Activated naive CD4-positive, alpha-beta T cell treated with anti-CD3 and anti-CD28 coated beads for 36 hours (primary cell): ENCODE measurements at regions of chr4 and their contacts with region 1.

Region 1: GRCh38 chr4:173420324-173420752 is 21.4 kb upstream of the SCRG1 start:
- DNase-seq: no peak
- H3K4me3 Mint-ChIP-seq: no peak overlapping the region
- H3K27ac Mint-ChIP-seq: no peak overlapping the region
- H3K4me1 Mint-ChIP-seq: peaks cover 4% of the 10 kb centered on the region
- H3K27me3 Mint-ChIP-seq: peaks cover 3% of the 10 kb centered on the region

Region 2: GRCh38 chr4:173025131-173025530 is 395.2 kb before region 1 on chr4:
- CTCF ChIA-PET with region 1: interaction called, 3 read pairs
- intact Hi-C with region 1: loop called (anchors 5 kb)
- DNase-seq: peak; percentile 43
- H3K4me3 Mint-ChIP-seq: no peak overlapping the region
- H3K27ac Mint-ChIP-seq: no peak overlapping the region
- H3K4me1 Mint-ChIP-seq: peaks cover 4% of the 10 kb centered on the region
- H3K27me3 Mint-ChIP-seq: no peaks in the 10 kb centered on the region

Region 3: DNA sequence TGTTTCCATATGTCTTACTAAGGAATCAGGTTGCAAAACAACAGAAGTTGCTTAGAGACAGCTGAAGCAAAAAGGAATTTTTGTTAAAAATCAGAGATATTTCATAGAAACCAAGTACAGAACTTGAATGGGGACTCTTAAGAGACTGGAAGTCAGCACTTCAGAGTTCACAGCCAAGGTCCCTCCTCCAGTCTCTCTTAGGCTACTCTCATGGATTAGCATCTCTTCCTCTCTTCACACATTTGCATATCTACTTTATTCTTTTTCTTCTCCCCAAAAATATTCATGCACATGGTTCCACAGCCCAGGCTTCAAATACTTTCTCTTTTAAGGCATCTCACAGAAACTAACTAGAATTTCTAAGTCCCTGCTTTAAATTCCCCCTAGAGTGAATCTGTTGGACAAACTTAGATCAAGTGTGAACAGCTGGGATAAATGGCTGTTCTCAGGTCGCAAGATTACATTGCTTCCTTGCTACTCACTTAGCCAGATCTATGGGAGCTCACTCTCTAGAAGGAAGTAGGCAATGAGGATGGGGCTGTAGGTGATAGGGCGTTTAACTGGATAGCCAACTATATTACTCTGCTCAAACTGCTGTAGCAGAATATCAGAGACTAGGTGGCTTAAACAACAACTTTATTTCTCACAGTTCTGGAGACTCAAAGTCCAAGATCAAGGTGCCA is 325.5 kb before region 1 on chr4:
- CTCF ChIA-PET with region 1: no interaction called
- intact Hi-C with region 1: no loop called
- DNase-seq: no peak
- H3K4me3 Mint-ChIP-seq: no peak overlapping the region
- H3K27ac Mint-ChIP-seq: no peak overlapping the region
- H3K4me1 Mint-ChIP-seq: no peaks in the 10 kb centered on the region
- H3K27me3 Mint-ChIP-seq: no peaks in the 10 kb centered on the region

Region 4: DNA sequence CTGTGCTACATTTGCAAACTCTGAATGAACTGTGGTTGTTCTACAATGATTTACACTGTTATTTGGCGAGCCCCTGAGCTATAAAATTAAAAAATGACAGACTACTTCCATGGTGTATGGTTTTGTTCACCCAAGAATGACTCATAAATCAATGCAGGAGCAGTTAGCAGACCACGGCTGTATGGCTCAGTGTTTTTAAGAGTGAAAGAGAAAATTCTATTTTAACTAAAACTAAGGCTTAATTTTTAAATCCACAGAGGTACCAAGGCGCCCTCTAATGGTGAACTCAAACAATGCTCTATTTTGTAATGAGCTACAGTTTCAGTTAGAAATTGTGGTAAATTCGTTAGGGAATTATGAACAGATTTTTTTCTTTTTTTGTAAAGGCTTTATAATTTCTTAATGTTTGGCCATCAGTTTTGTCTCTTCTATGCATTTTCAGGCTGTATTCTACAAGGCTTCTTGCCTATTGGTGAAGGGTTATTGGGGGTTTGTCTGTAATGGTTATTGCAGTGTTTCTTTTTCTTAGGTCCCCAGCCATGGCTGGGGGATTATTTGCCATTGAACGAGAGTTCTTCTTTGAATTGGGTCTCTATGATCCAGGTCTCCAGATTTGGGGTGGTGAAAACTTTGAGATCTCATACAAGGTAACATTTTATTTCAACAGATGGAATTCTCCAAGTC is 118.7 kb before region 1 on chr4:
- CTCF ChIA-PET with region 1: interaction called, 11 read pairs
- intact Hi-C with region 1: no loop called
- DNase-seq: peak; percentile 39
- H3K4me3 Mint-ChIP-seq: no peak overlapping the region
- H3K27ac Mint-ChIP-seq: no peak overlapping the region
- H3K4me1 Mint-ChIP-seq: peaks cover 2% of the 10 kb centered on the region
- H3K27me3 Mint-ChIP-seq: no peaks in the 10 kb centered on the region

Region 5: DNA sequence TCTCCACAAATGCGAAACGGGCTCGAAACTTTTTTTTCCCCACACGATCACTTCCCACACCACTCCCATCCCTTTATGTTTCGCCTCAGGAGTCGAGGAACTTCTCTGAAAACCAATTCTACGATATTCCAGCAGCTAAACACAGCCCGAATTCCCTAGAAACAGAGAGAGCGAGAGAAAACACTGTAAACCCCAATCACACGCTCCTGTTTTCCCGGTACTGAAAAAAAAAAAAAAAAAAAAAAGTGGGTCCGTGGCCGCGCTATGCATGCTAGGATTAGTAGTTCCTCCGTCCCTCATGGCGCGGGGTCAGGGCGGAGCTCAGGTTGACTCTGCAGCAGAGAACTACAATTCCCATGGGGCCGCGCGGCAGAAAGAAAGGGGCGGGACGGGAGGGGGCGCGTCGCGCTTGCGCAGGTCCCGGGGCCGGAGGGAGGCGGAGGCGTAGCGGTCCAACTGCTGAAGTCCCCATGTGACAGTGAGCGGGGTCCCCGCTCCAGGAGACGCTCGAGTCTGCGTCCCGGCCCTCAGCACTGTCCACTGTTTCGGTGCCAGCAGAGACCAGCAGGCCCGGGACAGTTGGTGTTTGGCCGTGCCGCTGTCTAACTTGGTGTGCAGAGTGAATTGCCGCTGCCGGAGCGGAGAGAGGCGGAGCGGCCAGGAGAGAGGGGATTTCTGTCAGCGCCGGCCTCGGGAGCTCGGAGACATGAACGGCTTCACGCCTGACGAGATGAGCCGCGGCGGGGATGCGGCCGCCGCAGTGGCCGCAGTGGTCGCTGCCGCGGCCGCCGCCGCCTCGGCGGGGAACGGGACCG is 49.7 kb before region 1 on chr4 and contains the start of gene SAP30:
- CTCF ChIA-PET with region 1: interaction called, 8 read pairs
- intact Hi-C with region 1: loop called (anchors 2 kb)
- DNase-seq: peak; percentile 98
- H3K4me3 Mint-ChIP-seq: peak within 1 kb of the TSS; percentile 99
- H3K27ac Mint-ChIP-seq: peak within 1 kb of the TSS; percentile 99
- H3K4me1 Mint-ChIP-seq: peaks cover 18% of the 10 kb centered on the region
- H3K27me3 Mint-ChIP-seq: peaks cover 20% of the 10 kb centered on the region
- total RNA-seq, gene SAP30: 9.2 to 9.7 TPM

Region 6: DNA sequence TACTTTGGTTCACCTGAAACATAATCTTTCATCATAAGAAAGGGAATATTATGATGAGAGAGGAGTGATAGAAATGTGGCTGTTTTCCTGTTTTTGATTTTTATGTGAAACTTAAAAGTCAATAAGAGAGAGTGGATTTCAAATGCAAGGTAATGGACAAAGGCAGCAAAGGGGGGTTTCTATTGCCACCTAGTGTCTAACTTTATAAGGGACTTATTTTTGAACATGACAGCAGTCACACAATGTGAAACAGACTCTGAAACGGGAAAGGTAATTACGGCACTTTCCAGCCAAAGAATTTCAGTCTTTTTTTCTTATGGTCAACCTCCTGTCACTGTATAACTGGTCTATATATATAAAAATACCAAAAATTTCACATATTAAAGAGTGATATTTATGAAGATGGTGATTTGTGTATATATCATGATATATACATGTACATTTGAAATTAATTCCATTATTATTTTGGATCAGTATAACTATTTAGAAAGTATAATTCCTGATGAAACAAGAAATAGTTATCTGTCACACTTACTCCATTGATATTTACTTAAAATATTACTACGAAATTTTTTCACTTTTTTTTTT is 736.0 kb after region 1 on chr4:
- CTCF ChIA-PET with region 1: no interaction called
- intact Hi-C with region 1: loop called (anchors 1 kb)
- DNase-seq: no peak
- H3K4me3 Mint-ChIP-seq: no peak overlapping the region
- H3K27ac Mint-ChIP-seq: no peak overlapping the region
- H3K4me1 Mint-ChIP-seq: no peaks in the 10 kb centered on the region
- H3K27me3 Mint-ChIP-seq: peaks cover 17% of the 10 kb centered on the region

Region 7: DNA sequence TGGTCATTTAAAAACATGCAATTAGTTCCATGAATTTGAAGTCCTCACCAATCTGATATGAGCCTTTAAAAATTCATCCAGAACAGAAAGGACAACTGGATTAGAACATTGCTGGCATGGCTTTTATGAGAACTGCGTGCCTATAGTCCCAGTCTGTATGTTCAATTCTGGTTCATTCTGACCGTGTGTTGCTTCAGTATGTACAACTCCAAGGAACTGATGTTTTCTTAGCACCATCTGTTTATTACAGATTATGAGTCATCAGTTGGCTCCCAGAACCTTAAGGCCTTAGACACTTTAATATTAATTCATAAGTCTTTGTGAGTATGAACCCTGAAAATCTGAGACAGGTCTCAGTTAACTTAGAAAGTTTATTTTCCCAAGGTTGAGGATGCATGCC is 978.4 kb after region 1 on chr4:
- CTCF ChIA-PET with region 1: no interaction called
- intact Hi-C with region 1: no loop called
- DNase-seq: no peak
- H3K4me3 Mint-ChIP-seq: no peak overlapping the region
- H3K27ac Mint-ChIP-seq: no peak overlapping the region
- H3K4me1 Mint-ChIP-seq: no peaks in the 10 kb centered on the region
- H3K27me3 Mint-ChIP-seq: peaks cover 12% of the 10 kb centered on the region